CD8-positive, alpha-beta T cell (primary cell): ENCODE measurements at regions of chr16 and their contacts with region 1.

Region 1: GRCh38 chr16:30747799-30748634 is at the start of gene PHKG2:
- DNase-seq: peak; percentile 88 to 99 (median 96)
- ATAC-seq: peak; percentile 93
- H3K4me3 ChIP-seq: peak within 1 kb of the TSS; percentile 59 to 68
- H3K4me3 Mint-ChIP-seq: peak within 1 kb of the TSS; percentile 89
- H3K27ac ChIP-seq: peak within 1 kb of the TSS; percentile 50 to 83
- H3K27ac Mint-ChIP-seq: peak within 1 kb of the TSS; percentile 66
- H3K4me1 ChIP-seq: peaks cover 12% of the 10 kb centered on the region
- H3K4me1 Mint-ChIP-seq: peaks cover 22% of the 10 kb centered on the region
- H3K27me3 ChIP-seq: no peaks in the 10 kb centered on the region
- H3K27me3 Mint-ChIP-seq: no peaks in the 10 kb centered on the region
- CTCF ChIP-seq: no peak
- total RNA-seq, gene PHKG2: 26.4 to 36.3 TPM

Region 2: DNA sequence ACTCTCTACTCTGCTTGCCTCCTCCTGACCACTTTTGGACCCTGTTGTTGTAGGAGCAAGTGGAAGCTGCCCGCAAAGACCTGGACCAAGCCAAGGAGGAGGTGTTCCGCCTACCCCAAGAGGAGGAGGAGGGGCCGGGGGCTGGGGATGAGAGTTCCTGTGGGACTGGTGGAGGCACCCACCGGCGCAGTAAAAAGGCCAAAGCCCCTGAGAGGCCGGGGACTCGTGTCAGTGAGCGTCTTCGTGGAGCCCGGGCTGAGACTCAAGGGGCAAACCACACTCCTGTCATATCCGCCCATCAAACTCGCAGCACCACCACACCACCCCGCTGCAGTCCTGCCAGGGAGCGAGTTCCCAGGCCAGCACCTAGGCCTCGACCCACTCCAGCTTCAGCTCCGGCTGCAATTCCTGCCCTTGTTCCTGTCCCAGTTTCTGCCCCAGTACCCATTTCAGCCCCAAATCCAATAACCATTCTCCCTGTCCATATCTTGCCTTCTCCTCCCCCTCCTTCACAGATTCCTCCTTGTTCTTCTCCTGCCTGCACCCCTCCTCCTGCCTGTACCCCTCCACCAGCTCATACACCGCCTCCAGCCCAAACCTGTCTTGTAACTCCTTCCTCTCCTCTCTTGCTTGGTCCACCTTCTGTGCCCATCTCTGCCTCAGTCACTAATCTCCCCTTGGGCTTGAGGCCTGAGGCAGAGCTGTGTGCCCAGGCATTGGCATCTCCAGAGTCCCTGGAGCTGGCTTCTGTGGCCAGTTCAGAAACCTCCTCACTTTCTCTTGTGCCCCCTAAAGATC is 10.8 kb before region 1 on chr16:
- CTCF ChIA-PET with region 1: no interaction called
- POLR2A ChIA-PET with region 1: interaction called, 6 read pairs
- intact Hi-C with region 1: loop called in 1 of 2 experiments (anchors 1 kb)
- DNase-seq: no peak
- ATAC-seq: no peak
- H3K4me3 ChIP-seq: no peak overlapping the region
- H3K4me3 Mint-ChIP-seq: no peak overlapping the region
- H3K27ac ChIP-seq: no peak overlapping the region
- H3K27ac Mint-ChIP-seq: peak overlapping the region; percentile 4
- H3K4me1 ChIP-seq: no peaks in the 10 kb centered on the region
- H3K4me1 Mint-ChIP-seq: peaks cover 5% of the 10 kb centered on the region
- H3K27me3 ChIP-seq: no peaks in the 10 kb centered on the region
- H3K27me3 Mint-ChIP-seq: no peaks in the 10 kb centered on the region
- CTCF ChIP-seq: no peak

Region 3: DNA sequence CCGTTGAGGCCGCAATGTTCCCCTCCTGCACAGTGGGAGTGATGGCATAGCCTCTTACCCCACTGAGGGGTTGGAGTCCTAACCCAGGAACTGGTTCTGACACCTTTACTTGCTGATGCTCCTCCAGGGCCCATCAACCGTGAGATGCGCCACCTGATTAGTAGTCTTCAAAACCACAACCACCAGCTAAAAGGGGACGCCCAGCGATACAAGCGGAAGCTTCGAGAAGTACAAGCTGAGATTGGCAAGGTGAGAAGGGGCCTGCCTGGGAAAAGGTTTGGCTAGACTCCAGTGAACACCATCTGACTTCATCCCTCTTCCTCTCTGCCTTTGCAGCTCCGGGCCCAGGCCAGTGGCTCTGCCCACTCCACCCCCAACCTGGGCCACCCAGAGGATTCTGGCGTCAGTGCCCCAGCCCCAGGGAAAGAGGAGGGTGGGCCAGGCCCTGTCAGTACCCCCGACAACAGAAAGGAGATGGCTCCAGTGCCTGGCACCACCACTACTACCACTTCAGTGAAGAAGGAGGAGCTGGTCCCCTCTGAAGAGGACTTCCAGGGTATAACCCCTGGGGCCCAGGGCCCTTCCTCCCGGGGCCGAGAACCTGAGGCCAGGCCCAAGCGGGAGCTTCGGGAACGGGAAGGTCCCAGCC is 19.9 kb after region 1 on chr16:
- CTCF ChIA-PET with region 1: no interaction called
- POLR2A ChIA-PET with region 1: interaction called, 13 read pairs
- intact Hi-C with region 1: no loop called
- DNase-seq: peak in 6 of 9 experiments; percentile 16 to 89 (median 62)
- ATAC-seq: peak; percentile 88
- H3K4me3 ChIP-seq: no peak overlapping the region
- H3K4me3 Mint-ChIP-seq: no peak overlapping the region
- H3K27ac ChIP-seq: peak overlapping the region in 1 of 2 experiments; percentile 52
- H3K27ac Mint-ChIP-seq: peak overlapping the region; percentile 67
- H3K4me1 ChIP-seq: peaks cover 15% of the 10 kb centered on the region
- H3K4me1 Mint-ChIP-seq: peaks cover 21% of the 10 kb centered on the region
- H3K27me3 ChIP-seq: no peaks in the 10 kb centered on the region
- H3K27me3 Mint-ChIP-seq: no peaks in the 10 kb centered on the region
- CTCF ChIP-seq: no peak

Region 4: GRCh38 chr16:30805370-30806169 is 57.6 kb after region 1 on chr16:
- CTCF ChIA-PET with region 1: interaction called, 3 read pairs
- POLR2A ChIA-PET with region 1: interaction called, 10 read pairs
- intact Hi-C with region 1: no loop called
- DNase-seq: peak in 8 of 9 experiments; percentile 39 to 80 (median 64)
- ATAC-seq: peak; percentile 86
- H3K4me3 ChIP-seq: peak overlapping the region; percentile 75 to 89
- H3K4me3 Mint-ChIP-seq: peak overlapping the region; percentile 83
- H3K27ac ChIP-seq: peak overlapping the region; percentile 36 to 48
- H3K27ac Mint-ChIP-seq: peak overlapping the region; percentile 55
- H3K4me1 ChIP-seq: peaks cover 16% of the 10 kb centered on the region
- H3K4me1 Mint-ChIP-seq: peaks cover 21% of the 10 kb centered on the region
- H3K27me3 ChIP-seq: no peaks in the 10 kb centered on the region
- H3K27me3 Mint-ChIP-seq: no peaks in the 10 kb centered on the region
- CTCF ChIP-seq: no peak

Region 5: GRCh38 chr16:30813821-30814189 is 65.8 kb after region 1 on chr16:
- CTCF ChIA-PET with region 1: interaction called, 3 read pairs
- POLR2A ChIA-PET with region 1: interaction called, 8 read pairs
- intact Hi-C with region 1: loop called in 1 of 2 experiments (anchors 1 kb)
- DNase-seq: no peak
- ATAC-seq: peak; percentile 2
- H3K4me3 ChIP-seq: peak overlapping the region; percentile 49 to 56
- H3K4me3 Mint-ChIP-seq: peak overlapping the region; percentile 82
- H3K27ac ChIP-seq: peak overlapping the region; percentile 72
- H3K27ac Mint-ChIP-seq: peak overlapping the region; percentile 88
- H3K4me1 ChIP-seq: peaks cover 18% of the 10 kb centered on the region
- H3K4me1 Mint-ChIP-seq: peaks cover 9% of the 10 kb centered on the region
- H3K27me3 ChIP-seq: no peaks in the 10 kb centered on the region
- H3K27me3 Mint-ChIP-seq: no peaks in the 10 kb centered on the region
- CTCF ChIP-seq: no peak